GM13976 (cell line): ENCODE measurements at regions of chr1 and their contacts with region 1.

Region 1: GRCh38 chr1:100037927-100038659 is 68.3 kb downstream of the SLC35A3 start:
- DNase-seq: peak; percentile 93
- CTCF ChIP-seq: no peak

Region 2: DNA sequence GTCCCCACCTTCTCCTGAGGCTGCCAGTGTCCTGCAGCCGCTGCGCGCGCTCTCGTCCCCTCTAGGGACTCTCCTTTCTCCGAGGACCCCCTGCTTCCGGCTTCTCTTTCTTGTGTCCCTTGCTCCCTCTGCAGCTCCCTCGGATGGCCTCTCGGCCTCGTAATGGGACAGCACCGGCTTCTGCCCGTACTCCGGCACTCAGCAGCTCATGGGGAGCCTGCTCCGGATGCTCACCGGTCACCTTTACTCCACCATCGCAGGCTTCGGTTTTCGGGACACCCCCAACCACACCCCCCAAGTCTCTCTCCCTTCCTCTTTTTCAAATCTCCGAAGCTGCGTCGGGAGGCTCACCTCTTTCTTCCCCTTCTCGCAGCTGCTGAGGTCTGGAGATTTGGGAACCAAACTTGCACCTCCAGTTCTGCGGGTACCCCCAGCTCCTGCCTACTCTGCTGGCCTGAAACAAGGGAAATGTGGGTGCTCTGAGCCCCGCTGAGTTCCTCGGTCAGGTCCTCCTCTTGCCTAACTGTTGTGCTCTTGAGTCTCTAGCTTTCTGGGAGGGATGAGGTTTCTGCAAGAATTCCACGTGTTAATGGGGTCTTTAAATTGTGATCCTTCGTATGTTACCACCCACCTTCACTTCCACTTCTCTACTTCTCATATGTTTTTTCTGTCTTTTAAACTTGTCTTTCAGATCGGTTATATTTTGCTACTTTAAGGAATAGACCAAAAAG is 315.1 kb after region 1 on chr1:
- in situ Hi-C with region 1: no loop called
- DNase-seq: peak; percentile 71
- CTCF ChIP-seq: no peak

Region 3: GRCh38 chr1:100895540-100896483 is 857.7 kb after region 1 on chr1 and contains the start of gene SLC30A7:
- in situ Hi-C with region 1: loop called (anchors 25 kb)
- DNase-seq: peak; percentile 91
- CTCF ChIP-seq: no peak